ENCODE measurements at regions of chr2 and their contacts with region 1.

Region 1: GRCh38 chr2:182650704-182651103 is 65.4 kb upstream of the DNAJC10 start:
- DNase-seq: peak in 1 of 2 experiments; percentile 25
- H3K4me3 ChIP-seq: no peak overlapping the region
- H3K4me3 Mint-ChIP-seq: no peak overlapping the region
- H3K27ac Mint-ChIP-seq: no peak overlapping the region
- H3K4me1 ChIP-seq: no peaks in the 10 kb centered on the region
- H3K4me1 Mint-ChIP-seq: no peaks in the 10 kb centered on the region
- H3K27me3 ChIP-seq: no peaks in the 10 kb centered on the region
- H3K27me3 Mint-ChIP-seq: no peaks in the 10 kb centered on the region
- CTCF ChIP-seq: peak; percentile 18 to 47

Region 2: GRCh38 chr2:182186132-182186735 is 464.5 kb before region 1 on chr2:
- CTCF ChIA-PET with region 1: interaction called, 4 read pairs
- POLR2A ChIA-PET with region 1: no interaction called
- intact Hi-C with region 1: loop called (anchors 1 kb)
- DNase-seq: peak in 1 of 2 experiments; percentile 52
- H3K4me3 ChIP-seq: no peak overlapping the region
- H3K4me3 Mint-ChIP-seq: no peak overlapping the region
- H3K27ac Mint-ChIP-seq: no peak overlapping the region
- H3K4me1 ChIP-seq: no peaks in the 10 kb centered on the region
- H3K4me1 Mint-ChIP-seq: no peaks in the 10 kb centered on the region
- H3K27me3 ChIP-seq: no peaks in the 10 kb centered on the region
- H3K27me3 Mint-ChIP-seq: no peaks in the 10 kb centered on the region
- CTCF ChIP-seq: peak; percentile 46 to 68

Region 3: DNA sequence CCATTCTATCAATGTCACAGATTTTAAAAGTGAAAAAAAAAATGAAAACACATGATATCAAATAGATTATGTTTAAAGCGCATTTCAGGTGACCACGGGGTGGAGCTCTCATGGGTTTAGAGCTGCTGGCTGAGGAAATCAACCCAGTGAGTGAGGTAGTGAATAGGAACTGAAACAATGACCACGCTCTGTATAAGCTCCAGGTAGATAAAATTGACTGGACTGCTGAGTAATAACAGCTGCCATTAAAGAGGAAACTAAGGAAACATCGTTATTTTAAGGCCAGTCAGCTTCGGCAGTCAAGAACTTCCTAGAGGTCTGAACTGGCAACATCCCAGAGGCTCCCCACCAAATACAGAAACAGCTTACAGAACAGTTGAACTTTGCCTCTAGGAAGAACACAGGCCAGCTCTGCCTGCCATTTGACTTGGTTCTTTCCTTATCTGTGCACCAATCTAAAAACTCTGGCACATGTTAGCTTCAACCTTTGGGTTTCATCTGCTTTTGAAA is 409.8 kb before region 1 on chr2:
- CTCF ChIA-PET with region 1: interaction called, 19 read pairs
- POLR2A ChIA-PET with region 1: no interaction called
- intact Hi-C with region 1: loop called (anchors 1 kb)
- DNase-seq: peak; percentile 43 to 46
- H3K4me3 ChIP-seq: no peak overlapping the region
- H3K4me3 Mint-ChIP-seq: no peak overlapping the region
- H3K27ac Mint-ChIP-seq: no peak overlapping the region
- H3K4me1 ChIP-seq: no peaks in the 10 kb centered on the region
- H3K4me1 Mint-ChIP-seq: no peaks in the 10 kb centered on the region
- H3K27me3 ChIP-seq: no peaks in the 10 kb centered on the region
- H3K27me3 Mint-ChIP-seq: no peaks in the 10 kb centered on the region
- CTCF ChIP-seq: peak; percentile 44 to 54

Region 4: DNA sequence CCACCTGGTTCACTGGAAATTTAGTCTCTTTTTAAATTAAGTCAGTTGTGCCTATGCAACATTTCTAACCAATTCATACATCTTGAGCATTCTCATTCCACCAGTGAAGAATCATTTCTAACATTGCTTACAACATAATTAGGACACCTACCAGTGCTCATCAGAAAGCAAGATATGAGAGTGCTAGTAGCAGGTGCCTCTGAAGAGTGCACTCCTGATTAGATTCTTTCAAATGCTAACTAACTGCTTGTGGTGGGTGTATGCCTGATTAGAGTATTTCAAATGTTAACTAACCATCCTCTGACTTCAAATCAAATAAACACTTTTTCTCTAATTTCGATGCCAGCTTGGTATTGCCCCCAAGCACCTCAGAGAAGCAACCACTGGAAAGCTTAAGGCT is 58.9 kb before region 1 on chr2:
- CTCF ChIA-PET with region 1: interaction called, 4 read pairs
- POLR2A ChIA-PET with region 1: no interaction called
- intact Hi-C with region 1: loop called (anchors 1 kb)
- DNase-seq: no peak
- H3K4me3 ChIP-seq: no peak overlapping the region
- H3K4me3 Mint-ChIP-seq: no peak overlapping the region
- H3K27ac Mint-ChIP-seq: no peak overlapping the region
- H3K4me1 ChIP-seq: no peaks in the 10 kb centered on the region
- H3K4me1 Mint-ChIP-seq: no peaks in the 10 kb centered on the region
- H3K27me3 ChIP-seq: no peaks in the 10 kb centered on the region
- H3K27me3 Mint-ChIP-seq: peaks cover 11% of the 10 kb centered on the region
- CTCF ChIP-seq: no peak

Region 5: GRCh38 chr2:182611009-182611408 is 39.7 kb before region 1 on chr2:
- CTCF ChIA-PET with region 1: interaction called, 12 read pairs
- POLR2A ChIA-PET with region 1: no interaction called
- intact Hi-C with region 1: loop called (anchors 2 kb)
- DNase-seq: no peak
- H3K4me3 ChIP-seq: no peak overlapping the region
- H3K4me3 Mint-ChIP-seq: no peak overlapping the region
- H3K27ac Mint-ChIP-seq: no peak overlapping the region
- H3K4me1 ChIP-seq: no peaks in the 10 kb centered on the region
- H3K4me1 Mint-ChIP-seq: no peaks in the 10 kb centered on the region
- H3K27me3 ChIP-seq: no peaks in the 10 kb centered on the region
- H3K27me3 Mint-ChIP-seq: no peaks in the 10 kb centered on the region
- CTCF ChIP-seq: no peak

Region 6: GRCh38 chr2:182636695-182637094 is 14.0 kb before region 1 on chr2:
- CTCF ChIA-PET with region 1: interaction called, 4 read pairs
- POLR2A ChIA-PET with region 1: no interaction called
- intact Hi-C with region 1: loop called (anchors 1 kb)
- DNase-seq: peak; percentile 17 to 50
- H3K4me3 ChIP-seq: no peak overlapping the region
- H3K4me3 Mint-ChIP-seq: no peak overlapping the region
- H3K27ac Mint-ChIP-seq: no peak overlapping the region
- H3K4me1 ChIP-seq: peaks cover 1% of the 10 kb centered on the region; the same call in 1 of the 2 replicates
- H3K4me1 Mint-ChIP-seq: no peaks in the 10 kb centered on the region
- H3K27me3 ChIP-seq: no peaks in the 10 kb centered on the region
- H3K27me3 Mint-ChIP-seq: peaks cover 11% of the 10 kb centered on the region
- CTCF ChIP-seq: no peak

Region 7: DNA sequence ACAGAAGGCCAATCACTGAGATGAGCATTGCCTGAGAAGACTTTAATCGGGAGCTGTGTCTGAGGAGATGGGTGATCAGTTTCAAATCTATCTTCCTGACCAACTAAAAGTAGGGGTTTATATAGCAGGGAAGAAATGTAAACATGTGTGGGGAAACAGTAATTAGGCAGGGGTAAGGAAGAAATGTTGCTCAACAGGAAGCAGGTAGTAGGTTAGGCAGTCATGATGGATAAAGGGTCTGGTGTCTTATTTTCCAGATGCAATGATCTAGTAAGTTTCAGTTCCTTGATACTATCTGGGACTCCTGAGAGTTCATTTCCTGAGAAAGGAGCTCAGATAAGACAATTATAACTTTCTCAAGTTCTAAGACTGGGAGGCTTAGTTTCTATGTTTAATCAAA is 31.5 kb after region 1 on chr2:
- CTCF ChIA-PET with region 1: no interaction called
- POLR2A ChIA-PET with region 1: no interaction called
- intact Hi-C with region 1: no loop called
- DNase-seq: no peak
- H3K4me3 ChIP-seq: no peak overlapping the region
- H3K4me3 Mint-ChIP-seq: no peak overlapping the region
- H3K27ac Mint-ChIP-seq: no peak overlapping the region
- H3K4me1 ChIP-seq: no peaks in the 10 kb centered on the region
- H3K4me1 Mint-ChIP-seq: no peaks in the 10 kb centered on the region
- H3K27me3 ChIP-seq: no peaks in the 10 kb centered on the region
- H3K27me3 Mint-ChIP-seq: no peaks in the 10 kb centered on the region
- CTCF ChIP-seq: no peak

Measured in Caco-2 (cell line).